Mammary epithelial cell (primary cell): ENCODE measurements at regions of chr6 and their contacts with region 1.

Region 1: GRCh38 chr6:111967131-111967530 is 86.8 kb upstream of the CCN6 start:
- DNase-seq: no peak
- H3K4me3 ChIP-seq: no peak overlapping the region
- H3K27ac ChIP-seq: no peak overlapping the region
- H3K4me1 ChIP-seq: peaks cover 8% of the 10 kb centered on the region
- H3K27me3 ChIP-seq: no peaks in the 10 kb centered on the region
- CTCF ChIP-seq: no peak

Region 2: GRCh38 chr6:111880181-111880888 is 86.8 kb before region 1 on chr6:
- CTCF ChIA-PET with region 1: no interaction called
- dilution Hi-C with region 1: loop called (anchors 5 kb)
- in situ Hi-C with region 1: no loop called
- intact Hi-C with region 1: no loop called
- DNase-seq: peak; percentile 35
- H3K4me3 ChIP-seq: no peak overlapping the region
- H3K27ac ChIP-seq: no peak overlapping the region
- H3K4me1 ChIP-seq: no peaks in the 10 kb centered on the region
- H3K27me3 ChIP-seq: no peaks in the 10 kb centered on the region
- CTCF ChIP-seq: no peak